Cardiac septum (tissue), 1 donor: ENCODE measurements at regions of chr9 and their contacts with region 1.

Region 1: GRCh38 chr9:406886-407654 is 192.4 kb downstream of the DOCK8 start:
- DNase-seq: no peak

Region 2: DNA sequence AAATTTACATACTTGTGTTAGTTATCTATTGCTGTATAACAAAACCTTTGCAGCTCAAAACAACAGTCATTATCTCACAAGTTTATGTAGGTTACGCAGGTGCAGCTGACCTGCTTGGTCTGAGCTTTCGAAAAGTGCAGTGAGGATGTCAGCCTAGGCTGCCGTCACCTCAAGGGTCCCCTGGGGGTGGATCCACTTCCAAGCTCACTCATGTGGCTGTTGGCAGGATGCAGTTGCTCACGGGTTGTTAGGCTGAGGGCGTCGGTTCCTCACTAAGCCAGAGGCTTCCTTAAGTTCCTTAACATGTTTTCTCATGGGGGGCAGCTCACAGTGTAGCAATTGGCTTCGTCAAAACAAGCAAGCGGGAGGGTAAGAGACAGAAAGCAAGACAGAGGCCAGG is 52.6 kb before region 1 on chr9:
- intact Hi-C with region 1: no loop called
- DNase-seq: no peak

Region 3: DNA sequence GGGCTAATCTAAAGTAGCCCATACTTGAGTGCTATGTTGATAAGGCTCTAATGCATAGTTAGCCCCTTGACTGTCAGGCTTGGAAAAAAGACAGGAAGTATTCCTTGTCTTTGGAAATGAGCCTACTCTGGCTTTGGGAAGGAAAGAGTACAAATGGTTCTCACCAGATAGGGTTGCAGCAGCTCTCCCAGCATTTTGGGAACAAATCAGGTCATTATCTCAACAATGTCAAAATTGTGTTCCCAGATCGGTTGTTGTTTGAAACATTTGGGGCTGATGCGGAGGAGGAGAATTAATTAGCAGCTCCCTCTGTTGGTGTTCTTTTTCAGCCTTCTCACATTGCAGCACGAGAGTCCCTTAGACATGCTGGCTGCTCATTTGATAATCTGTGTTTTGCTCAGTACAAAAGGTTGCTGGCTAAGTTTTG is 139.7 kb after region 1 on chr9:
- intact Hi-C with region 1: loop called (anchors 5 kb)
- DNase-seq: no peak

Region 4: GRCh38 chr9:763692-764524 is 356.8 kb after region 1 on chr9:
- intact Hi-C with region 1: loop called (anchors 5 kb)
- DNase-seq: no peak